A673 (cell line): ENCODE measurements at regions of chr1 and their contacts with region 1.

Region 1: DNA sequence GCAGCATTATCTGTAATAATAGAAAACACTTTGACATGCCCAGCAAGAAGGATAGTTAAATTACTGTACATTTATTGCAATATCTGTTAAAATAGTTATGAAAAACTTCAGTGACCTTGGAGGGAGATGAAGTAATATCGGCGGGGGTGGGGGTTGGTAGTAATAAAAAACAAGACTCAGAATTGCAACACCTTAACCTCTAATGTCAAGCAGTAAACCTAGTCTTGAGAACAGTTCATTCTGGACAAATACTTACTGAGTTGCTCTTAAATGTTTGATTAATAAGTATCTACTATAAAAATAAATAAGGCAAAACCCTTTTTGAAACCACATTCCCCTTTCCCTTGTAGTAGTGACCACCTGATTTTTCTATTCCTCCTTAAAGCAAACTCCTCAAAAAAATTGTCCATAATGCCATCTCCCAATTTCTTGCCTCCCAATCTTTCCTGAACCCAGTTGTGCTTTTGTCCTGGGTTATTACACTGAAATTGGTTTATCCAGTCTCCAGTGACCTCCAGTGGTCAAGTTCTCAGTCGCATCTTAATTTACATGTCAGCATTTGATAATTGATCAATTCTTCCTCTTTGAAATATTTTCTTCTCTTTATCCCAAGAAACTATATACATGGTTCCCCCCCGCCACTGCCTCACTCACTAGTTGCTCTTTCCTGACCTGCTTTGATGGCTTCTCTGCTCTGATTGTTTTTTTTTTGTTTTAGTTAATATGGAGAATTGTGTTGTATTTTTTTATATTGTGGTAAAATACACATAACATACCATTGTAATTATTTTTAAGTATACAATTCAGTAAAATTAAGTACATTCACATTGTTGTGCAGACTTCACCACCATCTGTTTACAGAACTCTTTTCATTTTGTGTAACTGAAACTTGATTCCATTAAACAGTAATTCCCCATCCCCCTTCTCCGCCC is 36.8 kb downstream of the RAP1A start:
- DNase-seq: peak; percentile 31
- H3K4me3 ChIP-seq: no peak overlapping the region
- H3K27ac ChIP-seq: no peak overlapping the region
- H3K4me1 ChIP-seq: peaks cover 3% of the 10 kb centered on the region
- H3K27me3 ChIP-seq: no peaks in the 10 kb centered on the region
- CTCF ChIP-seq: peak; percentile 46; the same call in 1 of the 2 replicates

Region 2: DNA sequence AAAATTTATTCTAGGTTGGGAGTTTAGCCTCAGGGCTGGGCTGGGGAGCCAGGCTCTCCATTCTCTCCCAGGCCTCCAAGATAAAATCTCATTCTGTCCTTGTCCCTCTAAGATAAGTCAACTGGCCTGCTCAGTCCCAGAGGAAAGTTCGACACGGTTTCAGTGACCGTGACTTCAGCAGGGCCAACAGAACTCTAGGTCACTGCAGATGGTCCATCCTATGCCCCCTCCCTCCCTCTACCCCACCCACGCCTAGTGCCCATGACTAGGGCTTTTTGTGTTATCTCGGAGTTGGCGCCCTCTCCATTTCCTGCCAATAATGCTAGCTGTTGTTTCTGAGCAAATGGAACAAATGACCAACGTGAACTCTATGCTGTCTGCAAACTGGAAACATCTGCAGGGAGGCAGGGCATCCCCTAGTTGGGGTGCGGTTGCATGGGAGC is 142.8 kb before region 1 on chr1:
- CTCF ChIA-PET with region 1: interaction called, 15 read pairs
- POLR2A ChIA-PET with region 1: no interaction called
- intact Hi-C with region 1: loop called (anchors 5 kb)
- DNase-seq: no peak
- H3K4me3 ChIP-seq: no peak overlapping the region
- H3K27ac ChIP-seq: no peak overlapping the region
- H3K4me1 ChIP-seq: no peaks in the 10 kb centered on the region
- H3K27me3 ChIP-seq: peaks cover 8% of the 10 kb centered on the region
- CTCF ChIP-seq: no peak

Region 3: GRCh38 chr1:111733183-111733991 is 77.0 kb after region 1 on chr1:
- CTCF ChIA-PET with region 1: no interaction called
- POLR2A ChIA-PET with region 1: no interaction called
- intact Hi-C with region 1: no loop called
- DNase-seq: no peak
- H3K4me3 ChIP-seq: no peak overlapping the region
- H3K27ac ChIP-seq: peak overlapping the region; percentile 8
- H3K4me1 ChIP-seq: peaks cover 46% of the 10 kb centered on the region
- H3K27me3 ChIP-seq: no peaks in the 10 kb centered on the region
- CTCF ChIP-seq: no peak

Region 4: DNA sequence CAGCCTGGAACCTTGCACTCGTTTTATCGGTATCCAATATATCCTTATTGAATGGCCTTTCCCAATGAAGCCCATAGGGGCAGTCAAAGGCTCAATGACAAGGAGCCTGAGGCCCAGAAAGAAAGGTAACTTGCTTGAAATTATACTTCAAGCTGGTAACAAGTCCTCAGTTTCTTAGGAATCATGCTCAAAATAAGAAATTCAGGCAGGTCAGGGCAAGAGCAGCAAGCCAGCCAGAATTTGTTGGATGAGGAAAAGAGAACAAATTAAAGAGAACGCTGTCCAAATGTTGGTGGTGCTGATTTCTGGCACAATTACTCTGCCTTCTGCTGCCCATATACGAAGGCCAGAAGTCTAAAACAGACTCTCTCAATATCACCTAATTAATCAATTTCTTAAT is 177.0 kb after region 1 on chr1:
- CTCF ChIA-PET with region 1: no interaction called
- POLR2A ChIA-PET with region 1: no interaction called
- intact Hi-C with region 1: no loop called
- DNase-seq: peak; percentile 30
- H3K4me3 ChIP-seq: no peak overlapping the region
- H3K27ac ChIP-seq: no peak overlapping the region
- H3K4me1 ChIP-seq: no peaks in the 10 kb centered on the region
- H3K27me3 ChIP-seq: peaks cover 28% of the 10 kb centered on the region
- CTCF ChIP-seq: no peak

Region 5: GRCh38 chr1:112177314-112177713 is 521.0 kb after region 1 on chr1:
- CTCF ChIA-PET with region 1: no interaction called
- POLR2A ChIA-PET with region 1: no interaction called
- intact Hi-C with region 1: no loop called
- DNase-seq: no peak
- H3K4me3 ChIP-seq: no peak overlapping the region
- H3K27ac ChIP-seq: no peak overlapping the region
- H3K4me1 ChIP-seq: no peaks in the 10 kb centered on the region
- H3K27me3 ChIP-seq: peaks cover 24% of the 10 kb centered on the region
- CTCF ChIP-seq: no peak